ENCODE measurements at regions of chr4 and their contacts with region 1.

Region 1: DNA sequence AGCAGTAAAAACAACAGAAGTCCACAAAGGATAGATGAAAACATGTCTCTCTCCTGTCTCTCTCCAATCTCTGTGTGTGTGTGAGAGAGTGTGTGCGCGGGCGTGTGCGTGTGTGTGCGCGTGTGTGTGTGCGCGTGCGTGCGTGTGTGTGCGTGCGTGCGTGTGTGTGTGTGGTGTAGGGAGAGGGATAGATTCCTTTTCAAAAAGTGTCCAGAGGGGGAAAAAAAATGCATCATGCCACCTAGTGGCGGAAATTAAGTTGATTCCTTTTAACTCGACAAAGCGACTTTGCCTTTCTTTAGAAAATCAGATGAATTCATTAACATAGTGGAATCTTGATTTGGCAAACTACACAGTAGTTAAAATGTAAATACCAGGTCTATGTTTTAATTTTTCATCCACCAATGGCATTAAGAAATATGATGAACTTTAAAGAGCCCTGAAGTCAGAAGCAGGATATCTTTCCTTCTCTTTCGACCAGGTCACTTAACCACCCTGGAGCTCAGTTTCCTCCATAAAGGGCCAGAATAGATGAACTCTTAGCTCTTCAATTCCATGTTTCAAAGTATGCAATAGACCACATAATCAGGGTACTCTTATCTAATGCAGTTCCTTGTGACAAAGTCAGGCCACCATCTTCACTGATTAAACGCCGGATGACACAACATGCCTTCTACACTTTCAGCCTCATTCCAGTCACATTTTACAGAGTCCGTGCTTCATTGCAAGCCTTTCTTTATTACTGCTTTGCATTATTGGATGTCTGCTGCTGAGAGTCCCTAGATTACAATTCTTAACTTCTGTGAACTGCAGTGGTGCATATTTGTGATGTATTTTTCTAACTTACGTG is 162.8 kb downstream of the FBXO8 start:
- DNase-seq: no peak
- H3K4me3 Mint-ChIP-seq: no peak overlapping the region
- H3K27ac Mint-ChIP-seq: no peak overlapping the region
- H3K4me1 Mint-ChIP-seq: peaks cover 3% of the 10 kb centered on the region
- H3K27me3 Mint-ChIP-seq: peaks cover 31% of the 10 kb centered on the region

Region 2: GRCh38 chr4:174005422-174005821 is 115.2 kb before region 1 on chr4:
- CTCF ChIA-PET with region 1: no interaction called
- POLR2A ChIA-PET with region 1: no interaction called
- DNase-seq: no peak
- H3K4me3 Mint-ChIP-seq: no peak overlapping the region
- H3K27ac Mint-ChIP-seq: no peak overlapping the region
- H3K4me1 Mint-ChIP-seq: no peaks in the 10 kb centered on the region
- H3K27me3 Mint-ChIP-seq: no peaks in the 10 kb centered on the region

Region 3: GRCh38 chr4:174134361-174134760 is 13.7 kb after region 1 on chr4:
- CTCF ChIA-PET with region 1: interaction called, 11 read pairs
- POLR2A ChIA-PET with region 1: no interaction called
- DNase-seq: no peak
- H3K4me3 Mint-ChIP-seq: no peak overlapping the region
- H3K27ac Mint-ChIP-seq: no peak overlapping the region
- H3K4me1 Mint-ChIP-seq: no peaks in the 10 kb centered on the region
- H3K27me3 Mint-ChIP-seq: peaks cover 1% of the 10 kb centered on the region

Measured in activated CD4-positive, alpha-beta memory T cell treated with anti-CD3 and anti-CD28 coated beads, Interleukin-2, amount 10 ng/mL, durations not matched to agents 7 days and 5 days (primary cell).